GM12878 (cell line): ENCODE measurements at regions of chr17 and their contacts with region 1.

Region 1: GRCh38 chr17:29931231-29931932 is 1.4 kb upstream of the SSH2 start:
- DNase-seq: peak; percentile 90
- ATAC-seq: peak; percentile 86
- H3K4me3 ChIP-seq: peak overlapping the region; percentile 96; the same call in 1 of the 2 replicates
- H3K27ac ChIP-seq: no peak overlapping the region
- H3K4me1 ChIP-seq: peaks cover 4% of the 10 kb centered on the region
- H3K27me3 ChIP-seq: no peaks in the 10 kb centered on the region
- CTCF ChIP-seq: peak; percentile 83 to 95 (median 94); a peak in 5 of 6 replicates
- EP300 ChIP-seq: peak; percentile 19 to 43; a peak in 2 of 4 replicates
- POLR2A ChIP-seq: no peak
- RAD21 ChIP-seq: peak; percentile 93

Region 2: GRCh38 chr17:29579866-29580771 is 351.3 kb before region 1 on chr17:
- CTCF ChIA-PET with region 1: interaction called, 8 read pairs
- POLR2A ChIA-PET with region 1: no interaction called
- RAD21 ChIA-PET with region 1: interaction called, 3 read pairs
- SMC1A ChIA-PET with region 1: interaction called, 3 read pairs
- in situ Hi-C with region 1: no loop called
- intact Hi-C with region 1: loop called (anchors 1 kb)
- DNase-seq: no peak
- ATAC-seq: peak; percentile 100
- H3K4me3 ChIP-seq: no peak overlapping the region
- H3K27ac ChIP-seq: no peak overlapping the region; the same call in 1 of the 2 replicates
- H3K4me1 ChIP-seq: peaks cover 11% of the 10 kb centered on the region
- H3K27me3 ChIP-seq: no peaks in the 10 kb centered on the region
- CTCF ChIP-seq: peak; percentile 82 to 93 (median 89)
- EP300 ChIP-seq: no peak
- POLR2A ChIP-seq: no peak
- RAD21 ChIP-seq: peak; percentile 87

Region 3: GRCh38 chr17:29753845-29754439 is 177.4 kb before region 1 on chr17:
- CTCF ChIA-PET with region 1: interaction called, 18 read pairs
- POLR2A ChIA-PET with region 1: no interaction called
- RAD21 ChIA-PET with region 1: interaction called, 6 read pairs
- SMC1A ChIA-PET with region 1: interaction called, 4 read pairs
- in situ Hi-C with region 1: no loop called
- intact Hi-C with region 1: no loop called
- DNase-seq: peak; percentile 61
- ATAC-seq: peak; percentile 81
- H3K4me3 ChIP-seq: no peak overlapping the region
- H3K27ac ChIP-seq: peak overlapping the region; percentile 21
- H3K4me1 ChIP-seq: peaks cover 32% of the 10 kb centered on the region
- H3K27me3 ChIP-seq: no peaks in the 10 kb centered on the region
- CTCF ChIP-seq: no peak
- EP300 ChIP-seq: no peak
- POLR2A ChIP-seq: no peak
- RAD21 ChIP-seq: no peak

Region 4: GRCh38 chr17:29807520-29808351 is 123.6 kb before region 1 on chr17:
- CTCF ChIA-PET with region 1: interaction called, 454 read pairs
- POLR2A ChIA-PET with region 1: interaction called, 87 read pairs
- RAD21 ChIA-PET with region 1: interaction called, 300 read pairs
- SMC1A ChIA-PET with region 1: interaction called, 271 read pairs
- in situ Hi-C with region 1: loop called (anchors 5 kb)
- intact Hi-C with region 1: loop called (anchors 1 kb)
- DNase-seq: peak; percentile 31
- ATAC-seq: peak; percentile 83
- H3K4me3 ChIP-seq: no peak overlapping the region
- H3K27ac ChIP-seq: no peak overlapping the region
- H3K4me1 ChIP-seq: peaks cover 19% of the 10 kb centered on the region
- H3K27me3 ChIP-seq: no peaks in the 10 kb centered on the region
- CTCF ChIP-seq: peak; percentile 65 to 85 (median 69)
- EP300 ChIP-seq: no peak
- POLR2A ChIP-seq: no peak
- RAD21 ChIP-seq: peak; percentile 90

Region 5: GRCh38 chr17:29844339-29845048 is 86.9 kb before region 1 on chr17:
- CTCF ChIA-PET with region 1: interaction called, 53 read pairs
- POLR2A ChIA-PET with region 1: interaction called, 20 read pairs
- RAD21 ChIA-PET with region 1: interaction called, 40 read pairs
- SMC1A ChIA-PET with region 1: interaction called, 35 read pairs
- in situ Hi-C with region 1: no loop called
- intact Hi-C with region 1: loop called (anchors 5 kb)
- DNase-seq: no peak
- ATAC-seq: no peak
- H3K4me3 ChIP-seq: no peak overlapping the region
- H3K27ac ChIP-seq: no peak overlapping the region
- H3K4me1 ChIP-seq: no peaks in the 10 kb centered on the region
- H3K27me3 ChIP-seq: no peaks in the 10 kb centered on the region
- CTCF ChIP-seq: no peak
- EP300 ChIP-seq: no peak
- POLR2A ChIP-seq: no peak
- RAD21 ChIP-seq: 0 out of 2 replicates have a peak, but pooled peaks have one; percentile 3

Region 6: DNA sequence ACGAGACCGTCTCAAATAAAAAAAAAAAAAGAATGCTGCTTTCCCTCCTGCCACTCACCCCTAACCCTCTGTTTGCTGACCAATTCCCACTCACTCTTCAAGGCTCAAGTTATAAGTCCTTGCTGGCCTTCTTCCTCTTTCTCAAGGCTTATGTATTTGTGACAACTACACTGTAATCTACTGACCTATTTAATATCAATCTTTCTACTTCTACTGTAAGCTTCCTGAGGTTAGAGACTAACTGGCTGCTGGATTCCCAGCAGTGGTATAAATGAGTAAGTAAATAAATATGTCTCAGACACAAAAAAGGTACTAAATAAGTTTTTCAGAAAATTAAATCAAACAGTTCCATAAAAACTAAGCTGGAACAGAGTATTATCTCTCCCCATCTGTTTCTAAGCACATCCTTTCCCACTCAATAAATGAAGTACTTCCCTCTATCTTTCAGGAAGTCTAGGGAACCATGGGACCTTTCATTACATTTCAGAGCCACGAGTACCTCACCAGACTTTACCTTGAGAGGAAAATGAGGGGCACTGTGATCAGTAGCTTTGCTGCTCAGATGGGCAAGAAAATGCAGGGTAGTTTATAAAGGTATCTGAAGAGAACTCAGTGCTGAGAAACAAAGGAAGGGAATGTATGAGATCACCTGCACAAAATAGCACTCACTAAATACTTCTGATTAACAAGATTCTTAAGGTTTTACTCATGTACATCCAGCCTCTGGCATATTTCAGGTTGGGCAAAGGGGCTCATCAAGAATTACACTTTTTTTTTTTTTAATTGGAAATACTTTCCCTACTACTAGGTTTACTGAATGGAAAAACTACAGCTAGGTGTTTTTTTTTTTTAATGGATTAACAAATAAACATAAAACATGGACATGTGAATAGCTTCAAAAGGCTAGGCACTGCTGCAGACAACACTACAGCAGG is 12.2 kb before region 1 on chr17:
- CTCF ChIA-PET with region 1: interaction called, 64 read pairs
- POLR2A ChIA-PET with region 1: interaction called, 23 read pairs
- RAD21 ChIA-PET with region 1: interaction called, 20 read pairs
- SMC1A ChIA-PET with region 1: interaction called, 40 read pairs
- in situ Hi-C with region 1: no loop called
- intact Hi-C with region 1: no loop called
- DNase-seq: no peak
- ATAC-seq: peak; percentile 53
- H3K4me3 ChIP-seq: no peak overlapping the region
- H3K27ac ChIP-seq: no peak overlapping the region
- H3K4me1 ChIP-seq: peaks cover 10% of the 10 kb centered on the region; the same call in 1 of the 2 replicates
- H3K27me3 ChIP-seq: no peaks in the 10 kb centered on the region
- CTCF ChIP-seq: no peak
- EP300 ChIP-seq: no peak
- POLR2A ChIP-seq: no peak
- RAD21 ChIP-seq: no peak

Region 7: DNA sequence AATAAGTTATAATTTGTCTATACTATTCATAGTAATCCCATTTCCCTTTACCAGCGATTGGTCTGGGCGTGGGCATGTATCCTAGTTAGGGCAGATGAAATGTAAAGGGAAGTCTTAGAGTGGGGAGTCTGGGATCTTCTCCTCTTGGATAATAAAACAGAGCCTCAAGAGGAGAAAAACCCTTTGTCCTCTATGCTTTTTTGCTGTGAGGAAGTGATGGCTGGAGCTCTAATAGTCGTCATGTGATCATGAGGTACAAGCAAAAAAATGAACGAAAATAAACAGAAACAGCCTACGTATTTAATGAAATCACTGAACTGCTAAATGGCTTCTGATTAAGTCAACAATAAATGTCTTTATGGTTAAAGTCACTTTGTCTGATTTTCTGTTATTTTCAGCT is 36.9 kb after region 1 on chr17:
- CTCF ChIA-PET with region 1: no interaction called
- POLR2A ChIA-PET with region 1: no interaction called
- RAD21 ChIA-PET with region 1: no interaction called
- SMC1A ChIA-PET with region 1: no interaction called
- in situ Hi-C with region 1: no loop called
- intact Hi-C with region 1: no loop called
- DNase-seq: no peak
- ATAC-seq: no peak
- H3K4me3 ChIP-seq: no peak overlapping the region
- H3K27ac ChIP-seq: no peak overlapping the region
- H3K4me1 ChIP-seq: no peaks in the 10 kb centered on the region
- H3K27me3 ChIP-seq: no peaks in the 10 kb centered on the region
- CTCF ChIP-seq: no peak
- EP300 ChIP-seq: no peak
- POLR2A ChIP-seq: no peak
- RAD21 ChIP-seq: no peak